GM12878 (cell line): ENCODE measurements at regions of chr10 and their contacts with region 1.

Region 1: DNA sequence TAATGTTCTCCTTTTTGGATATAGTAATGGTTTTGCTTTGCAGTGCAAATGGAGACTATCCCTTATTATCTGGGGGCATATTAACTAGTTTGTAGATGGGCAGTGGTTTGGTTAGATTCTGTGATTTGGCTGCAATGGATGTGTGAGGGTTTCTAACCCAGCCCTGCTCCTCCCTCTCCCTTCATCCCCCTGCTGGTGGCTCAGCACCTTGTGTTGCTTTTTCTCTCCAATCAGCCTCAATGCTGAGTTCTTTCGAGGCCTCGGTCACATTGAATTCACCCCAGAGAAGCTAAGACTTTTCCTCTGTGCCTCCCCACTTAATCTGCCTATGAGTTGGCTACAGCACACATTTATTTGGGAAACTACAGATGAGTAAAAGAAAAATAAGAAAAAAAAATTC is 120.0 kb downstream of the MALRD1 start:
- DNase-seq: no peak
- ATAC-seq: peak; percentile 55
- H3K4me3 ChIP-seq: no peak overlapping the region
- H3K27ac ChIP-seq: no peak overlapping the region
- H3K4me1 ChIP-seq: no peaks in the 10 kb centered on the region
- H3K27me3 ChIP-seq: no peaks in the 10 kb centered on the region
- CTCF ChIP-seq: 0 out of 6 replicates have a peak, but pooled peaks of 1 of the 3 experiments have one; percentile 3
- EP300 ChIP-seq: no peak
- POLR2A ChIP-seq: no peak
- RAD21 ChIP-seq: no peak

Region 2: GRCh38 chr10:19178682-19179357 is 10.2 kb after region 1 on chr10:
- CTCF ChIA-PET with region 1: interaction called, 3 read pairs
- POLR2A ChIA-PET with region 1: interaction called, 4 read pairs
- RAD21 ChIA-PET with region 1: no interaction called
- SMC1A ChIA-PET with region 1: interaction called, 14 read pairs
- in situ Hi-C with region 1: no loop called
- intact Hi-C with region 1: no loop called
- DNase-seq: no peak
- ATAC-seq: peak; percentile 43
- H3K4me3 ChIP-seq: no peak overlapping the region
- H3K27ac ChIP-seq: no peak overlapping the region
- H3K4me1 ChIP-seq: no peaks in the 10 kb centered on the region
- H3K27me3 ChIP-seq: no peaks in the 10 kb centered on the region
- CTCF ChIP-seq: no peak
- EP300 ChIP-seq: no peak
- POLR2A ChIP-seq: no peak
- RAD21 ChIP-seq: no peak